ENCODE measurements at regions of chr20 and their contacts with region 1.

Region 1: GRCh38 chr20:46174469-46175128 is 56.5 kb downstream of the CD40 start:
- DNase-seq: peak; percentile 37 to 71 (median 62)
- ATAC-seq: peak; percentile 91
- H3K4me3 ChIP-seq: no peak overlapping the region
- H3K4me3 Mint-ChIP-seq: peak overlapping the region in 4 of 10 donors; percentile 43 to 65 (median 48)
- H3K27ac ChIP-seq: no peak overlapping the region
- H3K27ac Mint-ChIP-seq: no peak overlapping the region
- H3K4me1 ChIP-seq: no peaks in the 10 kb centered on the region
- H3K4me1 Mint-ChIP-seq: peaks cover 0 to 5% (median 0%) of the 10 kb centered on the region in 7 donors
- H3K27me3 ChIP-seq: peaks cover 0 to 21% of the 10 kb centered on the region in 2 donors
- H3K27me3 Mint-ChIP-seq: peaks cover 50 to 71% (median 57%) of the 10 kb centered on the region in 5 donors

Region 2: GRCh38 chr20:45987108-45987780 is 187.4 kb before region 1 on chr20:
- CTCF ChIA-PET with region 1: interaction called, 6 read pairs
- POLR2A ChIA-PET with region 1: no interaction called
- intact Hi-C with region 1: loop called in 1 of 2 experiments (anchors 1 kb)
- DNase-seq: peak; percentile 53 to 80 (median 72)
- ATAC-seq: peak; percentile 98
- H3K4me3 ChIP-seq: no peak overlapping the region
- H3K4me3 Mint-ChIP-seq: no peak overlapping the region
- H3K27ac ChIP-seq: no peak overlapping the region
- H3K27ac Mint-ChIP-seq: no peak overlapping the region
- H3K4me1 ChIP-seq: no peaks in the 10 kb centered on the region
- H3K4me1 Mint-ChIP-seq: peaks cover 0 to 13% (median 0%) of the 10 kb centered on the region in 7 donors
- H3K27me3 ChIP-seq: no peaks in the 10 kb centered on the region
- H3K27me3 Mint-ChIP-seq: peaks cover 0 to 28% (median 5%) of the 10 kb centered on the region in 5 donors

Region 3: DNA sequence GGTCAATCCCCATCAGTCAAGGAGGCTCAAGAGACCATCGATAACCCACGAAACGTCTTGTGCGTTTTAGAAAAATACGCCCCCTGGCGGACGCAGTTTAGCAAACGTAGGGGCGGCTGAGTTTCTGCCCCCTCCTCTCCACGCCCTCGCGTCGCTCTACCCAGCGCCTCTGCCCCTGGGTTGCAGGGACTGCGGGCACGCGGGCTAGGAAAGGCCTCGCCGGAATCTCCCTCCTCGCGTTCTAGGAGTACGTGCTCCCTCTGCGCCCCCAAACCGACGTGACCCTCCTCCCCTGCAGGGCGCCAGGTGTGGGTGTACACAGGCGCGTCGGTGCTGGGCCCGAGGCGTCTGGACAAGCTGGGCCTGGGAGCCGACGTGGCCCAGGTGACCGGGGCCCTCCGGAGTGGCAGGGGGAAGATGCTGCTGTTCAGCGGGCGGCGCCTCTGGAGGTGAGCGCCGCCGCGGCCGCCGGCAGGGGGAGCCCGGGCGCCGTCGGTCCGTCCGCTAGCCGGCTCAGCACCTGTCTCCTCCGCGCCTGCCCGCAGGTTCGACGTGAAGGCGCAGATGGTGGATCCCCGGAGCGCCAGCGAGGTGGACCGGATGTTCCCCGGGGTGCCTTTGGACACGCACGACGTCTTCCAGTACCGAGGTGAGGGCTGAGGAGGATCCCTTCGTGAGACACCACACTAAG is 160.6 kb before region 1 on chr20:
- CTCF ChIA-PET with region 1: interaction called, 5 read pairs
- POLR2A ChIA-PET with region 1: no interaction called
- intact Hi-C with region 1: loop called (anchors 2 kb)
- DNase-seq: peak; percentile 39 to 73 (median 60)
- ATAC-seq: peak; percentile 76
- H3K4me3 ChIP-seq: peak overlapping the region; percentile 32
- H3K4me3 Mint-ChIP-seq: peak overlapping the region; percentile 23 to 76 (median 58)
- H3K27ac ChIP-seq: no peak overlapping the region
- H3K27ac Mint-ChIP-seq: peak overlapping the region in 3 of 9 donors; percentile 1 to 43 (median 29)
- H3K4me1 ChIP-seq: peaks cover 24 to 27% of the 10 kb centered on the region in 2 donors
- H3K4me1 Mint-ChIP-seq: peaks cover 38 to 61% (median 48%) of the 10 kb centered on the region in 7 donors
- H3K27me3 ChIP-seq: peaks cover 15 to 16% of the 10 kb centered on the region in 2 donors
- H3K27me3 Mint-ChIP-seq: peaks cover 52 to 68% (median 55%) of the 10 kb centered on the region in 5 donors

Region 4: GRCh38 chr20:46022411-46023147 is 152.0 kb before region 1 on chr20:
- CTCF ChIA-PET with region 1: interaction called, 8 read pairs
- POLR2A ChIA-PET with region 1: no interaction called
- intact Hi-C with region 1: loop called in 1 of 2 experiments (anchors 1 kb)
- DNase-seq: peak; percentile 47 to 81 (median 69)
- ATAC-seq: peak; percentile 66
- H3K4me3 ChIP-seq: peak overlapping the region; percentile 25
- H3K4me3 Mint-ChIP-seq: peak overlapping the region; percentile 46 to 85 (median 76)
- H3K27ac ChIP-seq: no peak overlapping the region
- H3K27ac Mint-ChIP-seq: no peak overlapping the region
- H3K4me1 ChIP-seq: peaks cover 0 to 6% of the 10 kb centered on the region in 2 donors
- H3K4me1 Mint-ChIP-seq: peaks cover 12 to 25% (median 17%) of the 10 kb centered on the region in 7 donors
- H3K27me3 ChIP-seq: peaks cover 7 to 15% of the 10 kb centered on the region in 2 donors
- H3K27me3 Mint-ChIP-seq: peaks cover 42 to 63% (median 47%) of the 10 kb centered on the region in 5 donors

Region 5: GRCh38 chr20:46132705-46133120 is 41.9 kb before region 1 on chr20:
- CTCF ChIA-PET with region 1: no interaction called
- POLR2A ChIA-PET with region 1: no interaction called
- intact Hi-C with region 1: loop called in 1 of 2 experiments (anchors 2 kb)
- DNase-seq: peak in 7 of 9 donors; percentile 37 to 60 (median 47)
- ATAC-seq: peak; percentile 83
- H3K4me3 ChIP-seq: no peak overlapping the region
- H3K4me3 Mint-ChIP-seq: no peak overlapping the region
- H3K27ac ChIP-seq: no peak overlapping the region
- H3K27ac Mint-ChIP-seq: no peak overlapping the region
- H3K4me1 ChIP-seq: no peaks in the 10 kb centered on the region
- H3K4me1 Mint-ChIP-seq: peaks cover 0 to 6% (median 0%) of the 10 kb centered on the region in 7 donors
- H3K27me3 ChIP-seq: no peaks in the 10 kb centered on the region
- H3K27me3 Mint-ChIP-seq: peaks cover 27 to 47% (median 31%) of the 10 kb centered on the region in 5 donors